ENCODE measurements at regions of chr19 and their contacts with region 1.

Region 1: DNA sequence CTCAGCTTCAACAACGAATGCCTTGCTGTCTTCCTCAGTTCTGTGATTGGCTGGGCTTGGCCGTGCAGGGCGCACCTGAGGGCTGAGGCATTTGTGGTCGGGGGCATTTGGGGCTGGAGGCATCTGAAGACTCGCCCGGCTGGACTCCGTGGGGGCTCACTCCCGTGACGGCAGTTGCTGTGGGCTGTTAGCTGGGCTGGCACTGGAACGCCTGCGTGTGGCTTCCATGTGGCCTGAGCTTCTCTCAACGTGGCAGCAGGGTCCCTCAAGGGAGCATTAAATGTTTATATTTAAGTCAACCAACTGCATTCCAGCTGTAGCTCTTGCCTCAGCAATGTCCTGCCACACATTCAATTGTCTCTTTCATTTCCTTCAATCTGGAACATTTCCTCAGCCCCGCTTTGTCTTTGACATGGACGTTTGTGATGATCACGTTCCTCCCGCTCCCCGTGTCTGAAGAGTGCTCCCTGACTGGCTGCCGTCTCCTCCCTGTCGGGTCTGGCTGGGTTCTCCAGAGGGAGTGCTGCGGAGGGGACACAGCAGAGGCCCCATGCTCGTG is 21.0 kb downstream of the CCDC8 start:
- DNase-seq: no peak
- ATAC-seq: no peak
- H3K4me3 ChIP-seq: no peak overlapping the region
- H3K4me3 Mint-ChIP-seq: no peak overlapping the region
- H3K27ac ChIP-seq: no peak overlapping the region
- H3K27ac Mint-ChIP-seq: peak overlapping the region; percentile 17 to 56
- H3K4me1 ChIP-seq: no peaks in the 10 kb centered on the region
- H3K4me1 Mint-ChIP-seq: peaks cover 5 to 11% (median 10%) of the 10 kb centered on the region in 3 donors
- H3K27me3 ChIP-seq: no peaks in the 10 kb centered on the region
- H3K27me3 Mint-ChIP-seq: no peaks in the 10 kb centered on the region

Region 2: DNA sequence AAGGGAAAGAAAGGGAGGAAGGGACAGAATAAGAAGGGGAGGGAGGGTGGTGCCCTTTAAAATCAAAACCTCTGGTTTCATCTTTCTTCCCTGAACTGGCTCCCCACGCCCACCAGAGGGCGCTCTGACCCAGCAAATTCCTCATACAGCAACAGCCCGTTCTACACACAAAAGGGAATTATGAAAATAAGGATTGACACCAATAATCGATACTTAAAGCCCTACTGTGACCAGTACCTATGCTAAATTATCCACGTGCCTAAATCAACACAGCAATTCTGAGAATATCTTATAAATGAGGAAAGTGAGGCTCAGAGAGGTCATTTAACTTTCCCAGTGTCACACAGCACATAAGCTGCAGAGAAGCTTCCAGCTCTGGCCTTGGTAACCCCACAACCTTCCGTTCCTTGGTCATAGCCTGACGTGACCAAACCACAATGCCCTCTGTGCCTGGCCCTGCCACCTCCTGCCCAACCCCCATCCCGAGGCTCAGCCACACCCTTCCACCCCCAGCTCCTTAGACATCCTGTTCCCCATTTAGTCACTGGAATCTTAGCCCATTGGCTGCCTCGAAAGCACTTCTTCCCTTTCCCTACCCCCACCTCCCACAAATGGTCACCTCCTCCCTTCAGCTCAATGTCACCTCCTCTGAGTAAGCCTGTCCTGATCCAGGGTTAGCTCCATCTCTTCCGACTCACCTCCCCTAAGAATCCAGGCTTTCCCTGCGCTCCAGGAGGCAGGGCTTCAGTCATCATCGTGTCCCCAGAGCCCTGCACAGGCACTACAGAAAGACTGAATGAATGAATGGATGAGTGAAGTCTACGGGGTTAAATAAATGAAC is 137.5 kb after region 1 on chr19:
- CTCF ChIA-PET with region 1: interaction called, 5 to 11 read pairs
- POLR2A ChIA-PET with region 1: no interaction called
- DNase-seq: peak; percentile 38 to 88 (median 68)
- ATAC-seq: peak; percentile 68 to 88 (median 76)
- H3K4me3 ChIP-seq: no peak overlapping the region
- H3K4me3 Mint-ChIP-seq: no peak overlapping the region
- H3K27ac ChIP-seq: no peak overlapping the region
- H3K27ac Mint-ChIP-seq: peak overlapping the region; percentile 6 to 58
- H3K4me1 ChIP-seq: peaks cover 5 to 17% of the 10 kb centered on the region in 2 experiments
- H3K4me1 Mint-ChIP-seq: peaks cover 22 to 25% (median 23%) of the 10 kb centered on the region in 3 donors
- H3K27me3 ChIP-seq: peaks cover 0 to 33% of the 10 kb centered on the region in 2 experiments
- H3K27me3 Mint-ChIP-seq: no peaks in the 10 kb centered on the region

Region 3: GRCh38 chr19:46542428-46543230 is 150.3 kb after region 1 on chr19:
- CTCF ChIA-PET with region 1: interaction called in 1 of 2 experiments, 12 read pairs
- POLR2A ChIA-PET with region 1: no interaction called
- DNase-seq: peak; percentile 38 to 88 (median 67)
- ATAC-seq: peak in 3 of 4 experiments; percentile 57 to 68 (median 58)
- H3K4me3 ChIP-seq: no peak overlapping the region
- H3K4me3 Mint-ChIP-seq: no peak overlapping the region
- H3K27ac ChIP-seq: no peak overlapping the region
- H3K27ac Mint-ChIP-seq: no peak overlapping the region
- H3K4me1 ChIP-seq: peaks cover 0 to 5% of the 10 kb centered on the region in 2 experiments
- H3K4me1 Mint-ChIP-seq: peaks cover 5 to 7% (median 5%) of the 10 kb centered on the region in 3 donors
- H3K27me3 ChIP-seq: peaks cover 0 to 3% of the 10 kb centered on the region in 2 experiments
- H3K27me3 Mint-ChIP-seq: no peaks in the 10 kb centered on the region